ENCODE measurements at regions of chr13 and their contacts with region 1.

Region 1: DNA sequence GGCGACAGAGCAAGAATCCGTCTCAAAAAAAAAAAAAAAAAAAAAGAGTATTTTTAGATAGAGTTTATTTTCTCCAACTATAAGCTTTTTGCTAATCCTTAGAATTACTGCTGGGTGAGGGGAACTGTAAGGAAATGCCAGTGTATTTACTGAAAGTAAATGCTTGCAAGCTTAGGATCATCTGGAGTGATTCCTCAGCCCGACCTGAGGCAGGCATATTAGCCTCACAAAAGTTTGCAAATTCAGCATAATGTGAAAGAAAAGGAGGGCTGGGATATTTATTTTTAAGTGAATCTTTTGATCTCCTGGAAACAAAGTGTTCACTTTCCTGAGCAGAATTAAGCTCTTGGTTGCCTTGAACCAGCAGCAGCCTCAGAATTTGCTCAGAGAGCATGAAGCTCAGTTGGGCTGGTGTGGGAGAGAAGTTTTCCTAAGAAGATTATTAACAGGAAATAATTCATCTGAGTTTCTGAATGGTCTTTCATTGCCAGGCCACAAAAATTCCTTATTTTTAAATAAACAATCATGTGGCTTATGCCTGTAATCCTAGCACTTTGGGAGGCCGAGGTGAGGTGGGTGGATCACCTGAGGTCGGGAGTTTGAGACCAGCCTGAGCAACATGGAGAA is 24.7 kb upstream of the SPATA13 start:
- DNase-seq: no peak
- H3K4me3 ChIP-seq: no peak overlapping the region
- H3K27ac ChIP-seq: no peak overlapping the region
- H3K4me1 ChIP-seq: no peaks in the 10 kb centered on the region
- H3K27me3 ChIP-seq: no peaks in the 10 kb centered on the region
- CTCF ChIP-seq: no peak

Region 2: GRCh38 chr13:23375001-23375971 is 760.5 kb before region 1 on chr13:
- CTCF ChIA-PET with region 1: no interaction called
- POLR2A ChIA-PET with region 1: no interaction called
- intact Hi-C with region 1: no loop called
- DNase-seq: peak; percentile 95
- H3K4me3 ChIP-seq: peak overlapping the region; percentile 89
- H3K27ac ChIP-seq: peak overlapping the region; percentile 87
- H3K4me1 ChIP-seq: peaks cover 3% of the 10 kb centered on the region
- H3K27me3 ChIP-seq: no peaks in the 10 kb centered on the region
- CTCF ChIP-seq: no peak

Region 3: DNA sequence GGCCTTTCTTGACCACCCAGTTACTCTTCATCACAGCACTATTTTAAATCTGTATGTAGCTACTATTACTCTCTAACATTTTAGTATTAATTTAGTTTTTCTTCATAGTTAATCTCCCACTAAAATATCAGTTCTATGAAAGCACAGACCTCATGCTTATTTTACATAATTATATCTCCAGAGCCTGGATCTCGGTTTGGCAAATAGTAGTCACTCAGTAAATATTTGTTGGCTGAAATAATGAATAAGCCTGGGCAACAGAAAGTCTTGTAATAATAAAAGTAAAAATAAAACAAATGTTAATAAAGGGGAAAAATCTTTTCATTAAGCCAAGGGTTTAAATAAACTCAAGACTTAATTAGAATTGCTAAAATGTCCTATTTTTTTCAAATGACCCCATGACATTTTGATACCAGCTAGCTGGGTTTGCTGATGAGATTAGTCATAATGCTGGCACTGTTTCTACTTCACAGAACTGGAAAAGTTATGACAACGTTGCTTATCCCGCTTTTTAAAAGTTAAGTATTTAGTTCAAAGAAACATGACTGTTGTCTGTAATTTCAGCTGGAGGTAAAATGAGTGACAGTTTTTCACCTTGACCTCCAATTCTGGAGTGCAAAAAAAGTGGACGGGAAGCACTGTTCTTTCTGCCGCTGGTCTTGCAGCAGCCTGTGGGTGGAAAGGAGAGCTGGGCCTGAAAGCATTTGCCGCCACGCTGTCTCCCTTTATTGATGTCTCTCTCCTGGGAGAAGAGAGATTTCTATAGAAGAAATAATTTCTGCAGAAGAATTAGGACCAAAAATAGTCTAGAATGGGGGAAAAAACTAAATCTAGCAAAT is 60.4 kb before region 1 on chr13:
- CTCF ChIA-PET with region 1: no interaction called
- POLR2A ChIA-PET with region 1: interaction called, 10 read pairs
- intact Hi-C with region 1: no loop called
- DNase-seq: no peak
- H3K4me3 ChIP-seq: no peak overlapping the region
- H3K27ac ChIP-seq: no peak overlapping the region
- H3K4me1 ChIP-seq: no peaks in the 10 kb centered on the region
- H3K27me3 ChIP-seq: no peaks in the 10 kb centered on the region
- CTCF ChIP-seq: no peak